ENCODE measurements at regions of chr6 and their contacts with region 1.

Region 1: GRCh38 chr6:147283460-147283859 is 79.2 kb downstream of the STXBP5 start:
- DNase-seq: no peak
- ATAC-seq: no peak

Region 2: GRCh38 chr6:146857180-146857979 is 426.1 kb before region 1 on chr6:
- intact Hi-C with region 1: loop called (anchors 5 kb)
- DNase-seq: peak; percentile 94
- ATAC-seq: peak; percentile 99

Region 3: GRCh38 chr6:147205690-147206600 is 77.5 kb before region 1 on chr6:
- intact Hi-C with region 1: no loop called
- DNase-seq: no peak
- ATAC-seq: no peak